ENCODE measurements at regions of chr22 and their contacts with region 1.

Region 1: GRCh38 chr22:32528984-32529982 is 54.7 kb downstream of the FBXO7 start:
- DNase-seq: peak; percentile 78
- H3K4me3 ChIP-seq: no peak overlapping the region
- H3K27ac ChIP-seq: no peak overlapping the region
- H3K4me1 ChIP-seq: peaks cover 6% of the 10 kb centered on the region
- H3K27me3 ChIP-seq: peaks cover 8% of the 10 kb centered on the region
- CTCF ChIP-seq: peak; percentile 80

Region 2: DNA sequence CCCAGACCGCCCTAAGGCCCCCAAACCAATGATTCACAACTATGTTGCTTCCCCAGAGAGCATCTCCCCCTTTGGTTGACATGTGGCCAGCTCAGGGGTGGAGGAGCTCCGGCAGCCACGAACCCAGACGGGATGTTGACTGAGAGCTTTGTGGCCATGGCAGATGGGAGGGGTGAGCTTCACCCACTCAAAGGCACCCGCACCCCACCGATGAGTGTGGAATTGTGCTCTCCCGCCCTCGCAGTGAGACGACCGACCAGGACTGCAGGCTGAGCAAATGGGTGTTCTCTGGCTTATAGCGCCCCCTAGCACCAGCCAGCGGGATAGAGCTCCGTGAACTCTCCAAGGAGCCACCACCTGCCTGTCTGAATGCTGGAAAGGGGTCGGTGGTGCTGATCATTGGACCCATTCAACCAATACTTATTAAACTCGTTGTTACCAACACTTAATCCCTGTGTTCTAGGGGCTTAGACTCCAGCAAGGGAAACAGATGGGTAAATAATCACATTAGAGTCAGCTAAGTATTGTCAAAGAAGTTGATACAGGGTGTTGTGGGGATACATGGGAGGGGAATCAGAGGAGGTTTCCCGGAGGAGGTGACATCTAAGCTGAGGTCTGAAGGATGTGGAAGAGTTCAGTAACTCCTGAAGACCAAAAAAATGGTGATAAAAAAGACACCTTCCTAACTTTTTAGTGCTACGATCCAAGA is 267.7 kb after region 1 on chr22:
- CTCF ChIA-PET with region 1: interaction called, 11 read pairs
- POLR2A ChIA-PET with region 1: no interaction called
- intact Hi-C with region 1: loop called (anchors 2 kb)
- DNase-seq: peak; percentile 68
- H3K4me3 ChIP-seq: no peak overlapping the region
- H3K27ac ChIP-seq: no peak overlapping the region
- H3K4me1 ChIP-seq: no peaks in the 10 kb centered on the region
- H3K27me3 ChIP-seq: peaks cover 27% of the 10 kb centered on the region
- CTCF ChIP-seq: peak; percentile 94

Region 3: GRCh38 chr22:32969502-32969901 is 440.2 kb after region 1 on chr22:
- CTCF ChIA-PET with region 1: interaction called, 13 read pairs
- POLR2A ChIA-PET with region 1: no interaction called
- intact Hi-C with region 1: no loop called
- DNase-seq: no peak
- H3K4me3 ChIP-seq: no peak overlapping the region
- H3K27ac ChIP-seq: no peak overlapping the region
- H3K4me1 ChIP-seq: no peaks in the 10 kb centered on the region
- H3K27me3 ChIP-seq: no peaks in the 10 kb centered on the region
- CTCF ChIP-seq: no peak

Region 4: GRCh38 chr22:33000342-33001280 is 471.3 kb after region 1 on chr22:
- CTCF ChIA-PET with region 1: no interaction called
- POLR2A ChIA-PET with region 1: no interaction called
- intact Hi-C with region 1: loop called (anchors 2 kb)
- DNase-seq: peak; percentile 84
- H3K4me3 ChIP-seq: no peak overlapping the region
- H3K27ac ChIP-seq: no peak overlapping the region
- H3K4me1 ChIP-seq: peaks cover 6% of the 10 kb centered on the region
- H3K27me3 ChIP-seq: no peaks in the 10 kb centered on the region
- CTCF ChIP-seq: peak; percentile 92

Measured in A673 (cell line).